GM12878 (cell line): ENCODE measurements at regions of chr6 and their contacts with region 1.

Region 1: GRCh38 chr6:159726918-159727716 is at the start of gene WTAP:
- DNase-seq: peak; percentile 89
- ATAC-seq: peak; percentile 86
- H3K4me3 ChIP-seq: peak within 1 kb of the TSS; percentile 91
- H3K27ac ChIP-seq: peak within 1 kb of the TSS; percentile 97
- H3K4me1 ChIP-seq: no peaks in the 10 kb centered on the region
- H3K27me3 ChIP-seq: no peaks in the 10 kb centered on the region
- CTCF ChIP-seq: no peak
- EP300 ChIP-seq: no peak
- POLR2A ChIP-seq: peak; percentile 95
- RAD21 ChIP-seq: no peak
- polyA plus RNA-seq, gene WTAP: 102 to 132 TPM

Region 2: GRCh38 chr6:159739341-159739740 is 12.2 kb after region 1 on chr6:
- CTCF ChIA-PET with region 1: interaction called, 7 read pairs
- POLR2A ChIA-PET with region 1: interaction called, 8 read pairs
- RAD21 ChIA-PET with region 1: interaction called, 4 read pairs
- SMC1A ChIA-PET with region 1: interaction called, 18 read pairs
- in situ Hi-C with region 1: no loop called
- intact Hi-C with region 1: no loop called
- DNase-seq: no peak
- ATAC-seq: no peak
- H3K4me3 ChIP-seq: no peak overlapping the region
- H3K27ac ChIP-seq: no peak overlapping the region
- H3K4me1 ChIP-seq: no peaks in the 10 kb centered on the region
- H3K27me3 ChIP-seq: no peaks in the 10 kb centered on the region
- CTCF ChIP-seq: no peak
- EP300 ChIP-seq: no peak
- POLR2A ChIP-seq: no peak
- RAD21 ChIP-seq: no peak

Region 3: DNA sequence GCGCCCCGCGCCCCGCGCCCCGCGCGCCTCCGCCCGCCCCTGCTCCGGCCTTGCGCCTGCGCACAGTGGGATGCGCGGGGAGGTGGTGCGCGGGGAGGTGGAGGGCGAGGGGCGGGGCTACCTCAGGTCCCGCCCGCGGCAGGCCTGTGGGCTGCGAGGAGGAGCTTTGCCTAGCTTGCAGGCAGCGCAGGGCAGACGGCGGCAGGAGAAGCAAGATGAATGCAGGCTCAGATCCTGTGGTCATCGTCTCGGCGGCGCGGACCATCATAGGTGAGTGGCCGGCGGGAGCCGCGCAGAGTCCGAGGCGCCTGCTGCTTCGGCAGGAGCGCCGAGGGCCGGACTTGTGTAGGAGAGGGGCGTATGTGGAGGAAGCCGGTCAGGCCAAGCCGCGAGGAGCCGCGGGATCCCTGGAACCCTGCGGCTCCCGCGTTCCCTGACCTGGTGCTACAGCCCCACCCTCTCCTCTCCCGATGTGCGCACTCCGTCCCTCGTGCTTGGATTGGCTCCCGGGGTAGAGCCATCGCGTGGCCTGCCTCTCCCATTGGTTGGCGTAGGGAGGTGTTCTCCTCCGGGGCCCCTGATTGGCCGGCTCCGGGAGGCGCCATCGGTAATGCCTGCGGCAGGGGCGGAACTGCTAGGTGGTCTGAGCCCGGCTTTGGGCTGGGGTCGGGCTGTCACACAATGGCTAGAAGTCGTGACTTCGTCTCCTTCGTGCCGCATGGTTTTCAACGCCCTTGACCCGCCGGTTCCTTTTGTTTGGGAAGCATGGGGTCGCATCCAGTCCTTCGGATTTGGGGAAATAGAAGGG is 35.0 kb after region 1 on chr6 and contains the start of gene ACAT2:
- CTCF ChIA-PET with region 1: interaction called, 8 read pairs
- POLR2A ChIA-PET with region 1: interaction called, 44 read pairs
- RAD21 ChIA-PET with region 1: interaction called, 10 read pairs
- SMC1A ChIA-PET with region 1: interaction called, 20 read pairs
- in situ Hi-C with region 1: no loop called
- intact Hi-C with region 1: loop called (anchors 1 kb)
- DNase-seq: peak; percentile 78
- ATAC-seq: peak; percentile 98
- H3K4me3 ChIP-seq: peak within 1 kb of the TSS; percentile 93
- H3K27ac ChIP-seq: peak within 1 kb of the TSS; percentile 96
- H3K4me1 ChIP-seq: peaks cover 5% of the 10 kb centered on the region
- H3K27me3 ChIP-seq: no peaks in the 10 kb centered on the region
- CTCF ChIP-seq: 0 out of 6 replicates have a peak, but pooled peaks of 1 of the 3 experiments have one; percentile 4
- EP300 ChIP-seq: no peak
- POLR2A ChIP-seq: peak; percentile 88
- RAD21 ChIP-seq: no peak
- polyA plus RNA-seq, gene ACAT2: 249 to 257 TPM